Aorta (tissue), 5 donors: ENCODE measurements at regions of chr2 and their contacts with region 1.

Region 1: DNA sequence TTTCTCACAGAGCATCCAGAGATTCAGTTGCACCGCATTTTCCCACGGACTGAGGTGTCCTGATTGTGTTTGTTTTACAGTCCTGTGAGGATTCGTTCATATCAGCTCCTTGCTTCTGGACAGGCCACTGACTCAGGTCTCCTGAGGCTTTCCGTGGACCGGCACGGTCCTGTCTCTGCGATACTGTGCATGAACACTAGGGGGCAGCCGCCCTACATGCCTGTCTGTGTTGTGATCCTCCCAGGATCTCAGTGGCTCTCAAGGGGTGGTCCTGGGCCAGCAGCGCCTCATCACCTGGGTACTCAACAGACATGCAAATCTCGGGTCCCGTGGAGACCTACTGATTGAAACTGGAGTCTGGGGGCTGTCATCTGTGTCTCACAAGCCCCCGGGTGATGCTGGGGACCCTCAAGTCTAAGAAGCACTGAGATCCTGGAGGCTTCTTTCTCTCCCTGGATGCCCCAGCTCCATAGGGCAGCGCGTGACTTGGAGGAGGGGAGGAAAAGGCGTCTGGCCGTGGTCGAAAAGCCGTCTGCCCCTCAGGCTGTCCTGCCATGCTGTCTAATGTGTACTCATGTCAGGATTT is 28.9 kb downstream of the IL1R2 start:
- DNase-seq: peak; percentile 91 to 96
- ATAC-seq: peak; percentile 94
- H3K4me3 ChIP-seq: no peak overlapping the region
- H3K27ac ChIP-seq: no peak overlapping the region
- H3K4me1 ChIP-seq: no peaks in the 10 kb centered on the region
- H3K27me3 ChIP-seq: no peaks in the 10 kb centered on the region

Region 2: GRCh38 chr2:101912545-101912944 is 108.1 kb before region 1 on chr2:
- intact Hi-C with region 1: no loop called
- DNase-seq: no peak
- ATAC-seq: no peak
- H3K4me3 ChIP-seq: no peak overlapping the region
- H3K27ac ChIP-seq: no peak overlapping the region
- H3K4me1 ChIP-seq: no peaks in the 10 kb centered on the region
- H3K27me3 ChIP-seq: no peaks in the 10 kb centered on the region

Region 3: GRCh38 chr2:101961296-101962191 is 59.1 kb before region 1 on chr2:
- intact Hi-C with region 1: no loop called
- DNase-seq: peak; percentile 84 to 88
- ATAC-seq: peak; percentile 91
- H3K4me3 ChIP-seq: no peak overlapping the region
- H3K27ac ChIP-seq: peak overlapping the region in 1 of 2 donors; percentile 47
- H3K4me1 ChIP-seq: peaks cover 0 to 5% of the 10 kb centered on the region in 2 donors
- H3K27me3 ChIP-seq: no peaks in the 10 kb centered on the region

Region 4: DNA sequence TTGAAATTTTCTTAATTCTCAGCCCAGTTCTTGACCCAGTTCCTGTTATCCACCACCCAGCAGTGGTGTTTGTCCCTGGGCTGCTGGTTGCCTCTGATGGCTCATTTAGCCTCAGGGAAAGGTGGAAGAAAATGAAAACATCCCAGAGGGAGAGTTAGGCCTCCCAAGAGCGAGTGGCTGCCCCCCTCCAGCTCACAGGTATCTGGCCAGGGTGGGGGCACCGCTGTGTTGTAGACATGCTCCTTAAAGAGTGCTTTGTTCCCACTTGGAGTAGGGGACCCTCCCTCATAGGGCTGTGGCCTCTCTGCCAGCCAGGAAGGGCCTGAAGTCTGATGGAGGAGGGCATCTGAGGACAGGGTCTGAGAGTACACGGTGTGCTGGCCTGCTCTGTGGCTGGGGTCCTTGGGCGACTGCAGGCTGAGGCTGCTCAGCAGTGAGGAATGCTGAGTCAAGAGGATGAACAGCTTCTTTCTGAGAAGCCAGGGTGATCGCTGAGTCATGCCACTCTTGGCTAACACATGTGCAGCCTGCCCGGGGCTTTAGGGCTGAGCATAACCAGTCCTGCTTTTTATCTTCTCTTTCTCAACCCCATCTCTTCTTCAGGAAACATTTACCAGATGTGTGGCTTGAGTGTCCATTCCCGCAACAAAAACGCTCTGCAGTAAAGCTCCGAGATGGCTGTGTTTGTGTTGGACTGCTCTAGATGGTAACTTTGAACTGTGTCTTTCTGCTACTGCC is 43.4 kb after region 1 on chr2:
- intact Hi-C with region 1: loop called (anchors 5 kb)
- DNase-seq: peak; percentile 93 to 95
- ATAC-seq: peak; percentile 94
- H3K4me3 ChIP-seq: no peak overlapping the region
- H3K27ac ChIP-seq: peak overlapping the region; percentile 95 to 100
- H3K4me1 ChIP-seq: peaks cover 2% of the 10 kb centered on the region in 2 donors
- H3K27me3 ChIP-seq: no peaks in the 10 kb centered on the region

Region 5: GRCh38 chr2:102166189-102166845 is 145.6 kb after region 1 on chr2:
- intact Hi-C with region 1: loop called (anchors 1 to 5 kb)
- DNase-seq: no peak
- ATAC-seq: peak; percentile 82
- H3K4me3 ChIP-seq: no peak overlapping the region
- H3K27ac ChIP-seq: no peak overlapping the region
- H3K4me1 ChIP-seq: peaks cover 0 to 4% of the 10 kb centered on the region in 2 donors
- H3K27me3 ChIP-seq: no peaks in the 10 kb centered on the region

Region 6: GRCh38 chr2:102240640-102241370 is 220.1 kb after region 1 on chr2:
- intact Hi-C with region 1: loop called (anchors 1 to 2 kb)
- DNase-seq: peak; percentile 94 to 97
- ATAC-seq: peak; percentile 94
- H3K4me3 ChIP-seq: no peak overlapping the region
- H3K27ac ChIP-seq: peak overlapping the region in 1 of 2 donors; percentile 48
- H3K4me1 ChIP-seq: no peaks in the 10 kb centered on the region
- H3K27me3 ChIP-seq: no peaks in the 10 kb centered on the region

Region 7: GRCh38 chr2:102355526-102356380 is 335.1 kb after region 1 on chr2 and contains the start of gene IL18R1:
- intact Hi-C with region 1: loop called in 1 of 2 experiments (anchors 10 kb)
- DNase-seq: peak; percentile 86 to 93
- ATAC-seq: peak; percentile 97
- H3K4me3 ChIP-seq: peak within 1 kb of the TSS; percentile 39 to 74
- H3K27ac ChIP-seq: no peak within 1 kb of the TSS
- H3K4me1 ChIP-seq: no peaks in the 10 kb centered on the region
- H3K27me3 ChIP-seq: no peaks in the 10 kb centered on the region
- total RNA-seq, gene IL18R1: 8.0 to 11.0 TPM

Region 8: GRCh38 chr2:102365763-102366162 is 345.1 kb after region 1 on chr2:
- intact Hi-C with region 1: no loop called
- DNase-seq: no peak
- ATAC-seq: no peak
- H3K4me3 ChIP-seq: no peak overlapping the region
- H3K27ac ChIP-seq: no peak overlapping the region
- H3K4me1 ChIP-seq: no peaks in the 10 kb centered on the region
- H3K27me3 ChIP-seq: no peaks in the 10 kb centered on the region